Astrocyte of the cerebellum (primary cell): ENCODE measurements at regions of chr7 and their contacts with region 1.

Region 1: GRCh38 chr7:7792056-7792455 is 73.6 kb upstream of the RPA3 start:
- DNase-seq: no peak
- H3K4me3 ChIP-seq: no peak overlapping the region
- CTCF ChIP-seq: no peak

Region 2: DNA sequence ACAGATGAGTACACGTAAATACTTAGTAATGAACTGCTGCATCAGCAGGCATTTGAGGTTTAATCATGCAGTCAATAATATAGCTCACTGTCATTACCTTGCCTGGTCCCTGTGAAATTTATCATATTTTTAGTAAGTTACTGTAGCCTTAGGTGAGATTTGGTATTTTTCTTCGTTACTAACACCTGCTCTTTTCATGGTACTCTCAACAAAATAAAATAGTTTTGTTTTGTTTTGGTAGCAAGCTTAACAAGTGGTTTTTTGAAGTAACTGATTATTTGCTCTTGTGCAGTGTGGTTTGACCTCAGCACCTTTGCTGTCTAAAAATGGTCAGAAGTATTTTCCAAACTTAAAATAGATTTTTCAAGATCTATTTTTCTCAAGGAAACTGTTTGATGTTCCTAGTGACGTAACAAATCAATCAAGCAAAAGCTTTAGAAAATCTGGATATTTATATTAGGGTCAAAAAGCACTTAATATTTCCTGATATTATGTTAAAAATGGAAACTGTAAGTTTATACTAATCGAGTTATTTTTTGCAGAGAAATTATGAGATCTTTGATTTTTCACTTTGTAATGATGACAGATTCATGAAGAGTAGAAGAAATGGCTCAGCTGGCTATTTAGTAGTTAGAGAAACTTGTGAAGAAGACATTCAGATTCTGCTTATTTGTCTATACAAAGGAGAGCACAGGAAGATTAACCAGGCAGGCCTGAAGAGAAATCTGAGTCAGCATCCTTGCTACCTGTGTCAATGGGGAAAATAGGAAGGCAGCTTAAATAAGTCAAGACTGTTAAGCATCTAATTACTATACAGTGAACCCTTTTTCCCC is 52.6 kb before region 1 on chr7:
- in situ Hi-C with region 1: loop called (anchors 5 kb)
- DNase-seq: no peak
- H3K4me3 ChIP-seq: no peak overlapping the region
- CTCF ChIP-seq: no peak

Region 3: DNA sequence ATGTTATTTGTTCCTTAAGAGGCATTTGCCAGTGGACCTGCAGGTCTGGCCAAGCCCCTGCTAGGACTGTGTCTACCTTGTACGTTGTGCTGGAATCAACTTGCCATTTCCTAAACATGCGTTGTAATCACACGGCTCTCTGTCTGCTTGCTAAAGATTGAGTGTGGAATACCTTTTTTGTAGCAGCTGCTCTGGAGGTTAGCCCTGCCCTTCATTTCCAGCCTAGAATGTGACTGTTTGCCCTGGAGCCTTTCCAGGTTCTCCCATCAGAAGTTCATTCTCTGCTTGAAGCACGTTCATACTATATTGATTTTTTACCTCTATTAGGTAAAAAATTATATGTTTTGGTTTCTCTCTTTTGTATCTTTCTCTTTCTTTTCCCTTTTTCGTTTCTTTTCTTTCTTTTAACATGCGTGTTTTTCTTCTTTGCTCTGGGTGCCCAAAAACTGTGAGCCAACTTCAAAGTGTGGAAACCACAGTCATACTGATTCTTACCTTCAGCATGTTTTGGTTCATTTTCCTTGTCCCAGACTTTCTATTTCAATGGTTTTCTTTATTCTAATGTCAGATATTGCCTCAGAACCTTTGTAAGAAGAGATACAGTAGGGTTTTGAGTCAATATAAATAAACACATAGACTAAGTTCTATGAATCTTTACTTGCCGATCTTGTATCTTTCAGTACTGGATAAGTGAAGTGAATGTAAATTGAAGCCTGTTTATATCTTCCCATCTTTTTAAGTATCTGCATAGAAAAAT is 38.2 kb after region 1 on chr7:
- in situ Hi-C with region 1: no loop called
- DNase-seq: no peak
- H3K4me3 ChIP-seq: no peak overlapping the region
- CTCF ChIP-seq: no peak